ENCODE measurements at regions of chr3 and their contacts with region 1.

Region 1: DNA sequence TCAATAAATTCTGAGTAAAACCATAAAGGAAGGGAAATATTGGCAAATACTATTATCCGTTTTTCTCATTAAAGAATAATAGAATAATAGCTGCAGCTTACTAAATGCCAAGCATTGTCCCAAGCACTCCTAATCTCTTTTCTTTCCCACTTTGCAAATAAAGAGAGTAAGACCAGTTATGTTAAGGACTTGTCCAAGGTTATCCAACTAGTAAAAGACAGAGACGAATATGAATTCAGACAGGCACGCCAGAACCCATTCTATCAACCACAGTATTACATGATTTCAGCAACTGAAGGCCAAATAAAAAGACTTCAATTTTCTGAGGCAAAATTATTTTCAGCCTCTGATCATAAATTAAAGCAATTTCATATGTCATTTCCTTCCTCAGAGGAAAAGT is 235.5 kb downstream of the STAG1 start:
- DNase-seq: no peak
- H3K4me3 ChIP-seq: no peak overlapping the region
- H3K27ac ChIP-seq: no peak overlapping the region
- H3K4me1 ChIP-seq: no peaks in the 10 kb centered on the region
- CTCF ChIP-seq: no peak

Region 2: DNA sequence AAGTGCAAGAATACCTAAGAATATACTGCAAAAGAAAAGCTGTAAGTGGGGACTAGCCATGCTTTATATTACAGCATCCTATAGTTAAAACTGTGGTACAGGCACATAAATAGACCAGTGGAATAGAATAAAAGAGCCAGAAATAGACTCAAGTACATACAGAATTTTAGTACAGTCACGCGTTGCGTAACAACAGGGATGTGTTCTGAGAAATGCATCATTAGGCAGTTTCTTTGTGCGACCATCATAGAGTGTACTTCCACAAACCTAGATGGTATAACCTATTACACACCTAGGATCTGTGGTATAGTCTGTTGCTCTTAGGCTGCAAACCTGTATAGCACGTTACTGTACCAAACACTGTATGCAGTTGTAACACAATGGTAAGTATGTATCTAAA is 204.7 kb before region 1 on chr3:
- CTCF ChIA-PET with region 1: no interaction called
- POLR2A ChIA-PET with region 1: no interaction called
- intact Hi-C with region 1: loop called (anchors 10 kb)
- DNase-seq: no peak
- H3K4me3 ChIP-seq: no peak overlapping the region
- H3K27ac ChIP-seq: no peak overlapping the region
- H3K4me1 ChIP-seq: no peaks in the 10 kb centered on the region
- CTCF ChIP-seq: no peak